ENCODE measurements at regions of chr14 and their contacts with region 1.

Region 1: DNA sequence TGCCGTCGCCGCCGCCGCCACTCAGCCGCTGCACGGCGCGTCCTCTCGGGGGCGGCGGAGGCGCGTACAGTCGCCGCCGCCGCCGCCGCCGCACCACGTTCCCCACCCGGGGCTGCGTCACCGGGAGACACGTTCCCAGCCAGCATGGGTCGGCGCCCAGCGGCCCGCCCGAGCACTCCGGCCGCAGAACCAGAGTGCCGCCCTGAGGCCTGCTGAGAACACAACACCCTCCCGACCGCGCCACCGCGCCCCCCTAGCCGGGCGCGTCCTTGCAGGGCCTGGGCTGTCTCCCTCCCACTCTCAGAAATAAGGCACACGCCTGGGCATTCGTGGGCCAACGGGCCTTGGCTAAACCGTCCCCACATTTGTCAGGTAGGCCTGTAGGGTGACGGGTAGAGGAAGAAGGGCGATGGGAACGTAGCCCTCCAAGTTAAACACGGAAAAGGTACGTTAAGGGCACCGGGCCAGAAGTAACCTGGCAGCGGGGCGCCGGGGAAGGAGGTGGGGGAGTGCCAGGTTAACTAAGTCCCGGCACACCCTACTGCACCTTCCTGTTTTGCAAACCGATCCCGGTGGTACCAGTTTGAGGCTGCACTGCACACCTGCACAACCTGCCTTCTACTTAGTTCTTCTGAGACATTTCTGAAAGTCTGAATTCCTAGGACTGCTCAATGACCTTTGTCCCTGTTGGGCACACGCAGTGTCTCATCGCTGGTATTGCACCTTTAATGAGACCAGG is at the start of gene MAP4K5:
- DNase-seq: peak; percentile 87 to 94
- ATAC-seq: peak; percentile 93 to 98 (median 97)
- H3K4me3 ChIP-seq: peak within 1 kb of the TSS; percentile 60
- H3K4me3 Mint-ChIP-seq: peak within 1 kb of the TSS; percentile 94
- H3K27ac ChIP-seq: peak within 1 kb of the TSS; percentile 67
- H3K27ac Mint-ChIP-seq: peak within 1 kb of the TSS; percentile 82
- H3K4me1 ChIP-seq: peaks cover 7% of the 10 kb centered on the region
- H3K4me1 Mint-ChIP-seq: peaks cover 43 to 45% of the 10 kb centered on the region in 2 donors
- H3K27me3 ChIP-seq: no peaks in the 10 kb centered on the region
- H3K27me3 Mint-ChIP-seq: peaks cover 3 to 12% of the 10 kb centered on the region in 2 donors
- CTCF ChIP-seq: peak; percentile 73
- total RNA-seq, gene MAP4K5: 63.3 to 74.6 (median 65.9) TPM

Region 2: DNA sequence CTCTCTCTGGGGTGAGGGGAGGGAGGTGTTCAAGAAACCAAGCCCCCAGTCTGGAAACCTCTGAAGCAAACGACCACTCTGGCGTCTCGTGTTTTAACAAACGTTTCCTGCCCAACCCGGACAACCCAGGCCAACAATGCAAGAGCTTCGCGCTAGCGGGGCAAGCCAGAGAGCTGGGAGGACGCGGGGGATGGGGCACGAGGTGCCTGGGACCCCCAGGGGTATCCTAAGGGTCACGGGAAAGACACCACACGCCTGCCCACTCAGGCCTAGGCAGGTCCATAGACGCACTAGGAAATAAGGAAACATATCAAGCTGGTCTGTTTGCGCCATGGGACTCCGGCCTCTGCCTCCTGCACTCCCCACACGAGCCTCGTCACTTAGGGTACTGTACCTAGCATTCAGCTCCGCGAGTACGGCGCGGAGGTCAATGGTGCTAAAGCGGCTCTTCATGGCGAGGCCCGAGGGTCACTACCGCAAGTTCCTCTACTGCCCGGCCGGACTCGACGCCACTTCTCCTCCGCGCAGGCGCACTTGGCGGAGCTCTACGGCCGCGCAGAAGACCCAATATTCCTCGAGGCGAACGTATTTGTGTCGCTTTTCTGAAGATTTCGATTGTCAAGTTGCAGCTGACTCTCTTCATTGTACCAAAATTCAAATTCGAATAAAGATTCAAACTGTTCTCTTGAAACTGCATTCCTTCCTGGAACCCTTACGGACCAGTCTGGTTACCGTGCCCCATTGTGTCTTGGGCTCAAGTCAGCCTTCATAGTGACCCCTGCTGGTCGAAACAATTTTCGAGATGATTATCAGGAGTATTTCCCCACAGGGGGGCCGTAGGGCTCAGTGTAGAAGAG is 680.1 kb before region 1 on chr14 and contains the start of gene NEMF:
- intact Hi-C with region 1: loop called (anchors 2 kb)
- DNase-seq: peak; percentile 71 to 93
- ATAC-seq: peak; percentile 81 to 90 (median 82)
- H3K4me3 ChIP-seq: peak within 1 kb of the TSS; percentile 84
- H3K4me3 Mint-ChIP-seq: peak within 1 kb of the TSS; percentile 92
- H3K27ac ChIP-seq: peak within 1 kb of the TSS; percentile 86
- H3K27ac Mint-ChIP-seq: peak within 1 kb of the TSS; percentile 93 to 98
- H3K4me1 ChIP-seq: peaks cover 13% of the 10 kb centered on the region
- H3K4me1 Mint-ChIP-seq: peaks cover 38 to 45% of the 10 kb centered on the region in 2 donors
- H3K27me3 ChIP-seq: no peaks in the 10 kb centered on the region
- H3K27me3 Mint-ChIP-seq: no peaks in the 10 kb centered on the region
- CTCF ChIP-seq: peak; percentile 80
- total RNA-seq, gene NEMF: 120 to 126 (median 122) TPM

Region 3: GRCh38 chr14:50231475-50232275 is 301.0 kb before region 1 on chr14 and contains the start of gene SOS2:
- intact Hi-C with region 1: loop called (anchors 2 kb)
- DNase-seq: peak; percentile 83 to 85
- ATAC-seq: peak; percentile 78 to 93 (median 86)
- H3K4me3 ChIP-seq: peak within 1 kb of the TSS; percentile 95
- H3K4me3 Mint-ChIP-seq: peak within 1 kb of the TSS; percentile 89
- H3K27ac ChIP-seq: peak within 1 kb of the TSS; percentile 98
- H3K27ac Mint-ChIP-seq: peak within 1 kb of the TSS; percentile 92 to 96
- H3K4me1 ChIP-seq: peaks cover 14% of the 10 kb centered on the region
- H3K4me1 Mint-ChIP-seq: peaks cover 35% of the 10 kb centered on the region in 2 donors
- H3K27me3 ChIP-seq: no peaks in the 10 kb centered on the region
- H3K27me3 Mint-ChIP-seq: no peaks in the 10 kb centered on the region
- CTCF ChIP-seq: no peak
- total RNA-seq, gene SOS2: 64.7 to 82.2 (median 69.5) TPM

Region 4: GRCh38 chr14:50321009-50321660 is 211.5 kb before region 1 on chr14:
- intact Hi-C with region 1: loop called (anchors 1 kb)
- DNase-seq: peak; percentile 35 to 91
- ATAC-seq: peak; percentile 95 to 99 (median 96)
- H3K4me3 ChIP-seq: no peak overlapping the region
- H3K4me3 Mint-ChIP-seq: no peak overlapping the region
- H3K27ac ChIP-seq: peak overlapping the region; percentile 70
- H3K27ac Mint-ChIP-seq: no peak overlapping the region
- H3K4me1 ChIP-seq: no peaks in the 10 kb centered on the region
- H3K4me1 Mint-ChIP-seq: peaks cover 4 to 13% of the 10 kb centered on the region in 2 donors
- H3K27me3 ChIP-seq: no peaks in the 10 kb centered on the region
- H3K27me3 Mint-ChIP-seq: no peaks in the 10 kb centered on the region
- CTCF ChIP-seq: peak; percentile 74

Region 5: GRCh38 chr14:50363714-50364111 is 169.0 kb before region 1 on chr14:
- intact Hi-C with region 1: loop called (anchors 2 kb)
- DNase-seq: peak; percentile 30 to 80
- ATAC-seq: peak; percentile 67 to 84 (median 70)
- H3K4me3 ChIP-seq: peak overlapping the region; percentile 44
- H3K4me3 Mint-ChIP-seq: peak overlapping the region; percentile 89
- H3K27ac ChIP-seq: peak overlapping the region; percentile 91
- H3K27ac Mint-ChIP-seq: peak overlapping the region; percentile 92 to 93
- H3K4me1 ChIP-seq: peaks cover 64% of the 10 kb centered on the region
- H3K4me1 Mint-ChIP-seq: peaks cover 50 to 55% of the 10 kb centered on the region in 2 donors
- H3K27me3 ChIP-seq: no peaks in the 10 kb centered on the region
- H3K27me3 Mint-ChIP-seq: no peaks in the 10 kb centered on the region
- CTCF ChIP-seq: no peak